ENCODE measurements at regions of chr12 and their contacts with region 1.

Region 1: DNA sequence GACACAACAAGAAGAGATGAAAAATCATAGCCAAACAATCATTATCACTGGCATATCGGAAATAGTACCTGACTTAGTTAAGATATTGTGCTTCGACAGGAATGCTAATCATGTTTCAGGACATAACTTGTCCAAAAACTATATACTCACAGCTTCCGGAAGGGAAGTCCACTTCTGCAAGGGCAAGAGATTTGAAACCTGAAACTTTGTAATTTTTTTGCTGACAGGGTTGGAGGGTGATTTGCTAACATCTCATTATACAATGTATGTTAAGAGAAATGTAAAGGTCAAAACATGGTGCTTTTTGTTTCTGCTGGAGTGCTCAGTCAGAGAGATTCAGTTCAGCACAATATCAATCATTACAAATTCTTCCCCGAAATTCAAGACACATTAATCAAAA is 200.3 kb downstream of the CNTN1 start:
- DNase-seq: no peak
- H3K4me3 ChIP-seq: no peak overlapping the region
- H3K27ac ChIP-seq: no peak overlapping the region
- H3K4me1 ChIP-seq: no peaks in the 10 kb centered on the region
- H3K27me3 ChIP-seq: no peaks in the 10 kb centered on the region
- CTCF ChIP-seq: no peak
- EP300 ChIP-seq: no peak
- POLR2A ChIP-seq: no peak

Region 2: DNA sequence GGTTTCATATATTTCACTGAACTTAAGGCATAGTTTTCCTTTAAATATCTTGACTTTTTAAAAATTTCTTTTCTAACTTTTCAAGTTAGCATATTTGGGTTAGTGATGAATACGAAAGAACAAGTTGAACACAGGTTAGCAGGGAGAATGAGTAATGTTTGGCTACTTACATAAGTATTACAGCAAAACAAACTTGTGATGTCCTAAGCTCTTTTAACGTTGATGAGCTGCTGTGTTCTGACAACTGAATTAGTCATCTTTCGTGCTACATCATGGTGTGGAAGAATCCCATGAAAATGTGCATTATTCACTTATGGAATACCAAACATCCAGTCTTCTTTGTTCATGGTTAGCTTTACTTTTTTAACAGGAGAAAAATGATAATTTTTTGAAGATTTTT is 259.3 kb after region 1 on chr12:
- in situ Hi-C with region 1: no loop called
- intact Hi-C with region 1: no loop called
- DNase-seq: no peak
- H3K4me3 ChIP-seq: no peak overlapping the region
- H3K27ac ChIP-seq: no peak overlapping the region
- H3K4me1 ChIP-seq: no peaks in the 10 kb centered on the region
- H3K27me3 ChIP-seq: no peaks in the 10 kb centered on the region
- CTCF ChIP-seq: no peak
- EP300 ChIP-seq: no peak
- POLR2A ChIP-seq: no peak

Region 3: GRCh38 chr12:41437563-41437962 is 545.0 kb after region 1 on chr12:
- in situ Hi-C with region 1: no loop called
- intact Hi-C with region 1: no loop called
- DNase-seq: no peak
- H3K4me3 ChIP-seq: no peak overlapping the region
- H3K27ac ChIP-seq: no peak overlapping the region
- H3K4me1 ChIP-seq: no peaks in the 10 kb centered on the region
- H3K27me3 ChIP-seq: no peaks in the 10 kb centered on the region
- CTCF ChIP-seq: no peak
- EP300 ChIP-seq: no peak
- POLR2A ChIP-seq: no peak

Region 4: DNA sequence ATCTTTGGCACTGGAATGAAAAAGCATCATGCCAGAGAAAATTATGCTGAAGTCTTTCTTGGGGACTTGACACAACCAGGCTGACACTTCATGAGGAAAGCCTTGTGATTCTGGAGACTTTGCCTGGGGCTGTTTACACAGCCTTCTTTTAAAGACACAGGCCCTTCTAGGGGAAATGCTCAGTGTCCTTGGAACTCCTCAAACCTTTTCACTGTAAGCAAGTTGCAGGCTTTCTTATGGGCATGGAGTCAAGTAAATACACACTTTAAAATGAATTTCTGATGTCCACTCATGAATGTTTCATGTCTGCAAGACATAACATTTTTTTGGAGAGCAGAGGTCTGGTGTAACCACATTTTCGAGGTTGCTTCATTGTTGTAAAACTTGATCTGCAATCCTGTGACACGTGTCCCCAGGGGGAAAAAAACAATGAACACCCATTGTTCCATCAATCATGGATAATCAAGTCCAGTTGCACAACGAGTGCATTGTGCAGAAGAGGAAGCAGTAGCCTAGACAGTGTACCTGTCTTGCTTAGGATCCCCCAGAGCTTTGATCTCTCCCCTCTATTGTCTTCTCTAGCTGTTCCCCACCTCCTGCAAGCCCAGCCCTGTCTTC is 1852.1 kb after region 1 on chr12:
- in situ Hi-C with region 1: no loop called
- intact Hi-C with region 1: loop called (anchors 10 kb)
- DNase-seq: no peak
- H3K4me3 ChIP-seq: no peak overlapping the region
- H3K27ac ChIP-seq: no peak overlapping the region
- H3K4me1 ChIP-seq: peaks cover 0 to 5% (median 0%) of the 10 kb centered on the region in 4 donors
- H3K27me3 ChIP-seq: no peaks in the 10 kb centered on the region
- CTCF ChIP-seq: no peak
- EP300 ChIP-seq: no peak
- POLR2A ChIP-seq: no peak